CD4-positive, alpha-beta memory T cell (primary cell): ENCODE measurements at regions of chr12 and their contacts with region 1.

Region 1: DNA sequence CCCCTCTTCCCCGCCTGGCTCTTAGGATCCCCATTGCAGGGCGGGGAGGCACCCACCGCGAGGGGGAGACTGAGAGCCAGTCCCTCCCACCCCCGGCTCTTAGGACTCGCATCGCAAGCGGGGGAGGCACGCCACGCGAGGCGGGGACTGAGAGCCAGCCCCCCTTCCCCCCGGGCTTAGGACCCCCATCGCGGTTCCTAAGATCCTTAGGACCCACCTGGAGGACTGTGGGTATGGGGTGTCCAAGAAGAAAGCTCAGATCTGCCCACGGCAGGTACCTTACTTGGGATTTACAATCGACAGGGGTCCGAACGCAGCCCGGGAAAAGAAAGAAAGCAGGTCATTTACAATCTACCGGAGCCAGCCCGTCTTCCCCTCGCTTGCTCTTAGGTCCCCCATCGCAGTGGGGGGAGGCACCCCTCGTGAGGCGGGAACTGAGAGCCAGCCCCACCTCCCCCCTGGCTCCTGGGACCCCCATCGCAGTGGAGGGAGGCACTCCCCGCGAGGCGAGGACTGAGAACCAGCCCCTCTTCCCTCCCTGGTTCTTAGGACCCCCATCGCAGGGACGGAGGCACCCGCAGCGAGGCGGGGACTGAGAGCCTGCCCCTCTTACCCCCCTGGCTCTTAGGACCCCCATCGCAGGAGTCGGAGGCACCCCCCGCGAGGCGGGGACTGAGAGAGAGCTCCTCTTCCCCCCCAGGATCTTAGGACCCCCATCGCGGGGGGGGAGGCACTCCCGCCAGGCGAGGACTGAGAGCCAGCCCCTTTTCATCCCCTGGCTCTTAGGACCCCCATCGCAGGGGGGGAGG is 43.7 kb downstream of the DDX11 start:
- DNase-seq: peak; percentile 39 to 54 (median 45)
- H3K4me3 ChIP-seq: peak overlapping the region; percentile 22 to 62
- H3K4me3 Mint-ChIP-seq: peak overlapping the region; percentile 70 to 91 (median 81)
- H3K27ac ChIP-seq: peak overlapping the region; percentile 4
- H3K27ac Mint-ChIP-seq: peak overlapping the region in 3 of 7 donors; percentile 24 to 72 (median 36)
- H3K4me1 ChIP-seq: peaks cover 24% of the 10 kb centered on the region
- H3K4me1 Mint-ChIP-seq: peaks cover 0 to 35% (median 2%) of the 10 kb centered on the region in 4 donors
- H3K27me3 ChIP-seq: no peaks in the 10 kb centered on the region
- H3K27me3 Mint-ChIP-seq: peaks cover 2 to 33% of the 10 kb centered on the region in 2 donors

Region 2: DNA sequence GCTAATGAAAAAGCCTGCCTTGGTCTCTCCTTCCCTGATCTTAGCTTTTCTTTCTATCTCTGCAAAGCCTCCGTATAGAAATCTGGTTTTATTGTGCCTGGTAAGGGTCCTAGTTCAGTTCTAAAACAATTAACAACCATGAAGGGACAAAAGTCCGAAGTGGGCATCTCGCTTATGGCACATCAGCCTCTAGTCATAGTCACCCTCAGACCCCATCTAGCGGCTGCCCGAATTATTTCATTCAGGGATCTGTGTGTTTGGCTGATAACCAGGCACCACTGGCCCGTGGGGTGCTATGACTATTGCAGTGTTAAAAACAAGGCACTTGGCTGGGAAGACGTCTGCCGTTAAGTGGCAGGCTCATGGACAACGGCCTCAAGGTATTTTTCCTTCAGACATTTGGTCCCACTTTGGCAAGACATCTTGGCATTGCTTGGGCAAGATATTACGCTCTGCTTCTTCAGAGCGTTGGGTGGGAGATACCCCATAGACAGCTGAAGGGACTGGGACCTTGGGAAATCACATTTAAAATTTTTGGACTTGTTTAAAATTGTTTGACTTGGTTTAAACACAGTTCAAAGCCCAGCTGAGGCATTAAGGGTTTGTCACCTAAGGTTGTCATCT is 121.5 kb after region 1 on chr12:
- CTCF ChIA-PET with region 1: no interaction called
- POLR2A ChIA-PET with region 1: no interaction called
- intact Hi-C with region 1: loop called (anchors 1 kb)
- DNase-seq: peak; percentile 19 to 63 (median 31)
- H3K4me3 ChIP-seq: no peak overlapping the region
- H3K4me3 Mint-ChIP-seq: peak overlapping the region in 2 of 8 donors; percentile 58 to 60
- H3K27ac ChIP-seq: no peak overlapping the region
- H3K27ac Mint-ChIP-seq: no peak overlapping the region
- H3K4me1 ChIP-seq: no peaks in the 10 kb centered on the region
- H3K4me1 Mint-ChIP-seq: peaks cover 0 to 5% (median 2%) of the 10 kb centered on the region in 4 donors
- H3K27me3 ChIP-seq: no peaks in the 10 kb centered on the region
- H3K27me3 Mint-ChIP-seq: peaks cover 21 to 34% of the 10 kb centered on the region in 2 donors